ENCODE measurements at regions of chr12 and their contacts with region 1.

Region 1: GRCh38 chr12:101172316-101172715 is 37.7 kb downstream of the SLC5A8 start:
- DNase-seq: no peak
- ATAC-seq: peak; percentile 45; the same call in 1 of the 3 replicates
- H3K4me3 ChIP-seq: no peak overlapping the region
- H3K27ac ChIP-seq: no peak overlapping the region
- H3K4me1 ChIP-seq: no peaks in the 10 kb centered on the region
- H3K27me3 ChIP-seq: no peaks in the 10 kb centered on the region
- CTCF ChIP-seq: peak; percentile 4 to 17 (median 8); a peak in 1 of 6 replicates
- EP300 ChIP-seq: no peak
- POLR2A ChIP-seq: no peak
- RAD21 ChIP-seq: 0 out of 2 replicates have a peak, but pooled peaks have one; percentile 27

Region 2: DNA sequence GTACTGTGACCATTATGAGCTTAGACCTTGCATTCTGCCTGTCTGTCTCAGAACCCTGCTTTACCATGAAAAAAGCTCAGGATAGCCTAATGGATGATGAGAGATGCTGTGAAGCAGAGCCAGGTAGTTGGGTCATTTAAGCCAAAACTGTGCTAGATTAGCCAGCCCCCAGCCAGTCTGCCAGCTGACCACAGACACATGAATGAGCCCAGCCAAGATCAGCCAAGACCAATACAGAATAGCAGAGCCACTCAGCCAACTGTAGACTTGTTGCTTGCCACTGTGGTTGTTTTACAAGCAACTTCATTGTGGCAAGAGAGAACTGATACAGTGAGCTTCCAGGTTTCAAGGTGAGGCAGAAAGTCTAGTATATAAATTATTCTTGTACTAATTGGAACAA is 94.8 kb after region 1 on chr12:
- CTCF ChIA-PET with region 1: no interaction called
- POLR2A ChIA-PET with region 1: no interaction called
- RAD21 ChIA-PET with region 1: no interaction called
- SMC1A ChIA-PET with region 1: no interaction called
- in situ Hi-C with region 1: no loop called
- intact Hi-C with region 1: loop called (anchors 2 kb)
- DNase-seq: no peak
- ATAC-seq: no peak
- H3K4me3 ChIP-seq: no peak overlapping the region
- H3K27ac ChIP-seq: no peak overlapping the region
- H3K4me1 ChIP-seq: no peaks in the 10 kb centered on the region
- H3K27me3 ChIP-seq: no peaks in the 10 kb centered on the region
- CTCF ChIP-seq: no peak
- EP300 ChIP-seq: no peak
- POLR2A ChIP-seq: no peak
- RAD21 ChIP-seq: no peak